Activated CD8-positive, alpha-beta T cell treated with anti-CD3 and anti-CD28 coated beads, Interleukin-2, amount 10 ng/mL, durations not matched to agents 7 days and 5 days (primary cell): ENCODE measurements at regions of chr12 and their contacts with region 1.

Region 1: GRCh38 chr12:9750276-9751203 is 10.2 kb downstream of the CD69 start:
- DNase-seq: peak; percentile 75
- ATAC-seq: peak; percentile 57
- H3K4me3 Mint-ChIP-seq: peak overlapping the region; percentile 51
- H3K27ac Mint-ChIP-seq: peak overlapping the region; percentile 72
- H3K4me1 Mint-ChIP-seq: peaks cover 56% of the 10 kb centered on the region
- H3K27me3 Mint-ChIP-seq: no peaks in the 10 kb centered on the region

Region 2: DNA sequence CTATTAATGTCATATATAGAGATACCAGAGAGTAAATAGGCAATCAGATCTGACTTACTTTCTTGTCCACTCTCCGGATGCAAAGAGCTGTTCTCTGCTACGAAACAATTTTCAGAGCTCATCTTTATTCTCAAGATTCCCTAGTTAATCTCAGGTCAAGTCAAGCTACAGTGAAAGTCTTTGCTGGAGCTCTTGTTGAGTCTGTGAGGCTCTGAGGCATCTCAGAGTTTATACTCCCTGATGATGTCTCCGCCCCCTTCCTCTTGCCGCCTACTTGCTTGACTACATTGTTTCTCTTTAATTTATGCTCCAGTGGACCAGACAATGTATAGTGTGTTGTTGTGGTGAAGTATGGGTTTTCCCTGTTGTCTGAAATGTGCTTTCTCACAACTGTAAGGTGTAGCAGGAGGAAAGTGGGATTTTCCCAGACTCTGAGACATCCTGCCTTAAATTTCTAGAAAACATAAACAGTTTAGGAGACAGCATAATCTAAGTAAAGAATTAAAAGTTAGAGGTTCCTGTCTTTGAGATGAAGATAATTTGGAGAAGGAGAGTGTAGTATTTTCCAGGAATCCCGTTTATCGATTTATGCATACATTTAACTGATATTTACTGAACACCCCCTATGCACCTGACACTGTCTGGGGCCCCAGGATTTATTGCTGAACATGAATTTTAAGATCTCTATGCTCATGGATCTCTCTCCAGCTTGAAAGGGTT is 10.3 kb after region 1 on chr12 and contains the start of gene CD69:
- CTCF ChIA-PET with region 1: interaction called, 97 read pairs
- POLR2A ChIA-PET with region 1: interaction called, 60 read pairs
- DNase-seq: peak; percentile 92
- ATAC-seq: peak; percentile 60
- H3K4me3 Mint-ChIP-seq: peak within 1 kb of the TSS; percentile 92
- H3K27ac Mint-ChIP-seq: peak within 1 kb of the TSS; percentile 94
- H3K4me1 Mint-ChIP-seq: peaks cover 39% of the 10 kb centered on the region
- H3K27me3 Mint-ChIP-seq: no peaks in the 10 kb centered on the region
- total RNA-seq, gene CD69: 115 to 116 TPM

Region 3: GRCh38 chr12:9797722-9798619 is 47.4 kb after region 1 on chr12:
- CTCF ChIA-PET with region 1: interaction called, 855 read pairs
- POLR2A ChIA-PET with region 1: interaction called, 494 read pairs
- DNase-seq: peak; percentile 87
- ATAC-seq: peak; percentile 83
- H3K4me3 Mint-ChIP-seq: no peak overlapping the region
- H3K27ac Mint-ChIP-seq: peak overlapping the region; percentile 64
- H3K4me1 Mint-ChIP-seq: peaks cover 46% of the 10 kb centered on the region
- H3K27me3 Mint-ChIP-seq: peaks cover 4% of the 10 kb centered on the region

Region 4: GRCh38 chr12:9906873-9907272 is 156.3 kb after region 1 on chr12:
- CTCF ChIA-PET with region 1: interaction called, 20 read pairs
- POLR2A ChIA-PET with region 1: no interaction called
- DNase-seq: peak; percentile 70
- ATAC-seq: peak; percentile 97
- H3K4me3 Mint-ChIP-seq: peak overlapping the region; percentile 55
- H3K27ac Mint-ChIP-seq: peak overlapping the region; percentile 89
- H3K4me1 Mint-ChIP-seq: peaks cover 52% of the 10 kb centered on the region
- H3K27me3 Mint-ChIP-seq: no peaks in the 10 kb centered on the region

Region 5: GRCh38 chr12:9940375-9940774 is 189.8 kb after region 1 on chr12:
- CTCF ChIA-PET with region 1: interaction called, 23 read pairs
- POLR2A ChIA-PET with region 1: no interaction called
- DNase-seq: peak; percentile 48
- ATAC-seq: no peak
- H3K4me3 Mint-ChIP-seq: no peak overlapping the region
- H3K27ac Mint-ChIP-seq: no peak overlapping the region
- H3K4me1 Mint-ChIP-seq: peaks cover 19% of the 10 kb centered on the region
- H3K27me3 Mint-ChIP-seq: peaks cover 13% of the 10 kb centered on the region

Region 6: DNA sequence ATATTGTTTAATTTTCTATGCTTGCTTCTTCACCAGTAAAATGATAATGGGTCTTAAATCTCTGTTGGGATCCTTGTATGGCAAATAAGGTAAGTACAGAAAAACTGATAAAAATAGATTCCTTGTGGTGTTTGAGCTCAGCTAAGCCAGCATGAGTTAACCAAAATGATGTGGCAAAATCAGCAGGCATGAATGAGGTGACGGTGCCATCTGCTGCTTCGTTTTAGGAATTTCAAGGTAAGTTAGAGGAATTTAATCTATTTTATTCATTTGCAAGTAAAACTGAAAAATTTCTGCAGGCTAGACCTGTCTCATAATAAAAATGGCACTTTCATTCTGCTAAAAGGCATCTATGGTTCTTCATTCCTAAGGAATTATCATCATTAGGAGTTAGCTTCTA is 389.5 kb after region 1 on chr12:
- CTCF ChIA-PET with region 1: interaction called, 30 read pairs
- POLR2A ChIA-PET with region 1: no interaction called
- DNase-seq: peak; percentile 72
- ATAC-seq: peak; percentile 64
- H3K4me3 Mint-ChIP-seq: no peak overlapping the region
- H3K27ac Mint-ChIP-seq: no peak overlapping the region
- H3K4me1 Mint-ChIP-seq: peaks cover 3% of the 10 kb centered on the region
- H3K27me3 Mint-ChIP-seq: peaks cover 16% of the 10 kb centered on the region